ENCODE measurements at regions of chr15 and their contacts with region 1.

Region 1: GRCh38 chr15:38671675-38672254 is 107.2 kb upstream of the RASGRP1 start:
- DNase-seq: peak; percentile 65
- ATAC-seq: peak; percentile 55
- H3K4me3 Mint-ChIP-seq: peak overlapping the region; percentile 60
- H3K27ac Mint-ChIP-seq: peak overlapping the region; percentile 98
- H3K4me1 Mint-ChIP-seq: peaks cover 75% of the 10 kb centered on the region
- H3K27me3 Mint-ChIP-seq: no peaks in the 10 kb centered on the region

Region 2: GRCh38 chr15:38652998-38653397 is 18.8 kb before region 1 on chr15:
- CTCF ChIA-PET with region 1: interaction called, 32 read pairs
- POLR2A ChIA-PET with region 1: interaction called, 5 read pairs
- intact Hi-C with region 1: loop called (anchors 1 kb)
- DNase-seq: peak; percentile 73
- ATAC-seq: peak; percentile 66
- H3K4me3 Mint-ChIP-seq: peak overlapping the region; percentile 50
- H3K27ac Mint-ChIP-seq: peak overlapping the region; percentile 92
- H3K4me1 Mint-ChIP-seq: peaks cover 75% of the 10 kb centered on the region
- H3K27me3 Mint-ChIP-seq: no peaks in the 10 kb centered on the region

Measured in activated CD4-positive, alpha-beta T cell treated with anti-CD3 and anti-CD28 coated beads for 36 hours (primary cell).